Panc1 (cell line): ENCODE measurements at regions of chr20 and their contacts with region 1.

Region 1: DNA sequence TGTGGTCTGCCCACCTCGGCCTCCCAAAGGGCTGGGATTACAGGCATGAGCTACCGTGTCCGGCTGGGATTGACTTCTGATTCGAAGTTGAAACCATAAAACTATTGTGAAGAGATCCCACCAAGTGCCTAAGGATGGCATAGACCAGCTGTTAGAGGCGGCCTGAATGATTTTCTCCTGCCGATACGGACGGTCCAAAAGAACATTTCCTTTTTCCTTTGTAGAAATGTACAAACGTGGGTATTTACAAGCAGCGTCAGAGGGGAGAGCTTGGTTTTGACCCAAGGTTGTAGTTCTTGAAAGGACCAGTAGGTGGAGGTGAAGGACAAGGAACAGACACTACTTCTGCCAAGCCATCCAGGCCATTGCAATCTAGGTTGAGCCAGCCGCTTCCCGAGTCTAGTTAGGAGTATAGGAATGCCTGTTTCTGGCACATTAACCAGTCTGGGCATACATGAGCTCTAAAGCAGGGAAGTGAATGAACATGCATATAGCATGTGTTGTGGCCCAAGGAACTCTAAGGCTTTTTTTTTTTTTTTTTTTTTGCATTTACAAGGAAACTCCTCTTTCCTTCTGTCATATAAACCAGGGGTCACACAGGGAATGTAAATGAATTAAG is 29.1 kb downstream of the MOCS3 start:
- DNase-seq: peak; percentile 91
- ATAC-seq: peak; percentile 96
- H3K4me3 ChIP-seq: peak overlapping the region; percentile 6 to 48; a peak in 3 of 4 replicates
- H3K27ac ChIP-seq: no peak overlapping the region
- H3K4me1 ChIP-seq: no peaks in the 10 kb centered on the region
- H3K27me3 ChIP-seq: no peaks in the 10 kb centered on the region
- CTCF ChIP-seq: peak; percentile 90

Region 2: DNA sequence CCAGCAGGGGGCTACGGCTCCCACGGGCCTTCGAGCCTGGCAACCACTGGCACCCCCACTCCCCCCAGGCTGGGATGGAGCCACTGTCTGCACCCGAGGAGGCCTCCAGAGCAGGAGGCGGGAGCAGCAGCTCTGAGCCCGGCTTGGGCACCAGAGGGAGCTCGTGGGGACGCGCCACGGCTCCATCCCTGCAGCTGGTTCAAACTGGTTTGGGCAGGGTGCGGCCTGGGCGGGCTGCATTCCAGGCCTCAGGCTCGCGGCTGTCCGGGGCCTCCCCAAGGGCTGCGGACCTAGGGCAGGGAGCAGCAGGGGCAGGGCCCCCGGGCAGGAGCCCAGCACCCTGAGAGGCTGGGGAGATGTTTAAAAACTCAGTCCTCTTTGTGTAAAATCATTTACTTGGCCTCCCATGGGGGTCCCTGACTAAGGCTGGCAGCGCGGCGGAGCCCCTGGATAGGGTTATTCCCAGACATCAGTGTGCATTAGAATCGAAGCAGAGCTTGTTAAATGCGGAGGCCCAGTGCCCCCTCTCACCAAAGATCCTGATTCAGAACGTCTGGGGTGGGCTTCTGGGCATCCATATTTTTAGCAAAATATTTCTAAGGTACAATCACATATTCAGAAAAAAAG is 196.9 kb before region 1 on chr20:
- CTCF ChIA-PET with region 1: interaction called, 10 read pairs
- POLR2A ChIA-PET with region 1: no interaction called
- in situ Hi-C with region 1: no loop called
- intact Hi-C with region 1: no loop called
- DNase-seq: peak; percentile 69
- ATAC-seq: peak; percentile 82
- H3K4me3 ChIP-seq: no peak overlapping the region
- H3K27ac ChIP-seq: peak overlapping the region; percentile 99
- H3K4me1 ChIP-seq: peaks cover 58% of the 10 kb centered on the region
- H3K27me3 ChIP-seq: no peaks in the 10 kb centered on the region
- CTCF ChIP-seq: peak; percentile 95

Region 3: GRCh38 chr20:50957276-50957675 is 30.4 kb before region 1 on chr20:
- CTCF ChIA-PET with region 1: interaction called, 16 read pairs
- POLR2A ChIA-PET with region 1: no interaction called
- in situ Hi-C with region 1: no loop called
- intact Hi-C with region 1: no loop called
- DNase-seq: no peak
- ATAC-seq: no peak
- H3K4me3 ChIP-seq: peak overlapping the region; percentile 92 to 100
- H3K27ac ChIP-seq: peak overlapping the region; percentile 98
- H3K4me1 ChIP-seq: peaks cover 20% of the 10 kb centered on the region
- H3K27me3 ChIP-seq: no peaks in the 10 kb centered on the region
- CTCF ChIP-seq: no peak

Region 4: GRCh38 chr20:51036827-51037531 is 49.3 kb after region 1 on chr20:
- CTCF ChIA-PET with region 1: no interaction called
- POLR2A ChIA-PET with region 1: no interaction called
- in situ Hi-C with region 1: no loop called
- intact Hi-C with region 1: no loop called
- DNase-seq: no peak
- ATAC-seq: no peak
- H3K4me3 ChIP-seq: no peak overlapping the region
- H3K27ac ChIP-seq: no peak overlapping the region
- H3K4me1 ChIP-seq: no peaks in the 10 kb centered on the region
- H3K27me3 ChIP-seq: no peaks in the 10 kb centered on the region
- CTCF ChIP-seq: no peak

Region 5: DNA sequence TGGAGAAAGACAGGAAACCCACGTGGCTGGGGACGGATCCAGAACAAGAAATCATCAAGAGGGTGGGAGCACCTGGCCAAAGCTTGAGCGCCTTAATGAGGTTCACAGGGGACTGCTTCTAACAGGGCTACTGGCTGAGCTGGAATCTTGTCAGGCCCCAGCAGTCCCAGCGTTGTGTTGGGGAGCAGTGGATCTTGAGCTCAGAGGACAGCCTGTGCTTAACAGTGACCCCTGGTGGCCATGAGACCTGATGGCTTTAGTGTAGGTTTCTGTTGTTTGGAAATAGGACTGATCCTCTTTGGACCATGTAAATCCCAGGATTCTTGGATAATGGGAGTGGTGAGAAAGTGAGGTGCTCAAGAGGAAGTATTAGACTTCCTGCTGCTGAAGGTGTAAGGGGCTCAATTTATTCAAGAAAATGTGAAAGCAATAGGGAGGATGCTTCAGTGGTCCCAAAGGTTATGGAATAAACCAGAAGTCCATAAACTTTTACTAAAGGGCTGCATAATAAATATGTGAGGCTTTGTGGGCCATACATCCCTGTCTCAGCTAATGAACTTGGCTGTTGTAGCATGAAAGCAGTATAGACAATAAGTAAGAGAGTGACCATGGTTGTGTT is 338.6 kb after region 1 on chr20:
- CTCF ChIA-PET with region 1: interaction called, 18 read pairs
- POLR2A ChIA-PET with region 1: interaction called, 13 read pairs
- in situ Hi-C with region 1: no loop called
- intact Hi-C with region 1: no loop called
- DNase-seq: no peak
- ATAC-seq: peak; percentile 55; the same call in 1 of the 2 replicates
- H3K4me3 ChIP-seq: no peak overlapping the region
- H3K27ac ChIP-seq: no peak overlapping the region
- H3K4me1 ChIP-seq: no peaks in the 10 kb centered on the region
- H3K27me3 ChIP-seq: no peaks in the 10 kb centered on the region
- CTCF ChIP-seq: peak; percentile 70; the same call in 1 of the 2 replicates

Region 6: DNA sequence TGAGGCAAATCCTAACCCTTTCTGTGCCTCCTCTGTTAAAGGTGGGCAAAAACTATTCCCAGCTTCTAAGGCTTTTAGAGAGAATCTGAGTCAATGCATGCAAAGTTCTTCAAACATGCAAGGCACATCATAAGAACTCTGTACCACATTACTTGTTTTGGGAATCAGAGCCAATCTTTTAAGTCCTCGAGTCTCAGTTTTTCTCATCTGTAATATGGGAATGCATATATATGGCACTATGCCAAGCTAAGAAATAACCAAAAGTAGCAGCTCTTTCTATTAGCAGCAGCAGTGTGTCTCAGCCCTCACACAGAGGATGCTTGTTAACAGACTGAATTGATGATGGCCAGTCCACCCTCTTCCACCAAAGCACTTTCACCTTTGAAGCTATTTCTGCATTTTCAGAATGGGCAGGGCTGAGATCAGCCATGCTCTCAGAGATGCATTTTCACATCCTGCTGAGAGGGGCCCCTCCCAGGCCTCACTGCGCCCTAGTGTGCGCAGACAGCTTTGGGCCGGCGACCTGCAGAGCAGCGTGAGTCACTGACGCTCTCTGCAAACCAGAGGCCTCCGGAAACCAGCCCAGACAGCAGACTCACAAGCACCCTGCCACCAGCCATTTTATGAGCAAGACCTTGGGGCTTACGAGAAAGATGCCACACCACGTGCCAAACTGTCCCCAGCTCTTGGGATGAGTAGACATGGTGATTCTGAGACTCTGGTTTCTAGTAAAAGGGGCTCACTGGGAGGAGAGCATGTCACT is 416.8 kb after region 1 on chr20:
- CTCF ChIA-PET with region 1: interaction called, 16 read pairs
- POLR2A ChIA-PET with region 1: no interaction called
- in situ Hi-C with region 1: no loop called
- intact Hi-C with region 1: no loop called
- DNase-seq: no peak
- ATAC-seq: no peak
- H3K4me3 ChIP-seq: no peak overlapping the region
- H3K27ac ChIP-seq: no peak overlapping the region
- H3K4me1 ChIP-seq: no peaks in the 10 kb centered on the region
- H3K27me3 ChIP-seq: no peaks in the 10 kb centered on the region
- CTCF ChIP-seq: no peak

Region 7: DNA sequence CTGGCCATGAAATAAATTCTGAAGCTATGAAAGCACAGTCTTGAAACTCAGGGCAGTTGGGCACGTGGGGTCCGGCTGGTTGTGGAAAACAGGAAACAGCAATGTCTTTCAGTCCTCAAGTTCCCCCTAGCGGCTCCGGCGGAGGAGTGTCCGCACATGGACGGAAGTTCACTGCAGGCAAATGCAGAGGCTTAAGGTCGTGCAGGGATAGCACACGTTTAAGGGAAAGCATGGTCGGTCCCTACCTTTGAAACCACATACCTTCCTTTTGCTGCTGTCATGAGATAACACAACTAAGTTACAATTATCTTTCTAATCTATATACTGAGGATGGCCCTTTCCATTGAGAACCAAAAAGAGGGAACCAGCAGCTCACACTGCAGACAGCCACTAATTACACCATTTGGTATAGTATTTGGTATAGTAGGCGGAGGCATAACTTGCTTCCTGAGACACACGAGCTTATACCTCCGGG is 607.4 kb after region 1 on chr20:
- CTCF ChIA-PET with region 1: interaction called, 3 read pairs
- POLR2A ChIA-PET with region 1: no interaction called
- in situ Hi-C with region 1: no loop called
- intact Hi-C with region 1: loop called (anchors 10 kb)
- DNase-seq: peak; percentile 82
- ATAC-seq: peak; percentile 99
- H3K4me3 ChIP-seq: no peak overlapping the region
- H3K27ac ChIP-seq: peak overlapping the region; percentile 80
- H3K4me1 ChIP-seq: peaks cover 13% of the 10 kb centered on the region
- H3K27me3 ChIP-seq: no peaks in the 10 kb centered on the region
- CTCF ChIP-seq: peak; percentile 92